ENCODE measurements at regions of chr4 and their contacts with region 1.

Region 1: DNA sequence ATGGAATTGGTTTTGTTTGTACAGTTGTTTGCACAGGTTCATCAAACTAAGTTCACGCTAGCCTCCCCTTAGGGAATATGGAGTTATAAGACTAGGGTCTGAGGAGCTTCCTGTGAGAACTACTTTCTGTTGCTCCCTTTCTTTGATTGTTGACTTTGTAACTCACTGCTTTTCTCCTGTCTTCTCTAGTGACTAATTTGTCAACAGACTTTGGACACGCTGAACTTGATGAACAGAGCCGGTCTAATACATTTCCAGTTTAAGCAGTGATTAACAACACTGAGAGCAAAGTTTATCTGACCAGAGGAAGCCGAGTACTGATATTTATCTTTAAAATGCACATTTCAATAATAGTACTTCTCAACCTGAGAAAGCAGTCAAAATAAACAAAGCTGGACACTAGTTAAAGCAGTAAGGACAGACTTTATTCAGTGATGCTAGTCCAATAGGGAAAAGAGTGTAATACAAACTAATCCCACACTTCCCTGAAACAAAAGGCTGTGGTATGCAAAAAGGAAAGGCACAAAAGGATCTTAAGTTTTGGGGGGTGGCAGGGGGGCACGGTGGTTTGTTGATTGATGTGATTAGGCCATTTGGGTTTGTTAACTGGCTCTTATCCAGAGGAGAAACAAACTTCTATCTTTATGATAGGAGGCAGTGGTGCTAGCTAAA is 2.7 kb upstream of the NUDT9 start:
- DNase-seq: no peak
- H3K4me3 ChIP-seq: no peak overlapping the region
- CTCF ChIP-seq: no peak
- POLR2A ChIP-seq: no peak

Region 2: DNA sequence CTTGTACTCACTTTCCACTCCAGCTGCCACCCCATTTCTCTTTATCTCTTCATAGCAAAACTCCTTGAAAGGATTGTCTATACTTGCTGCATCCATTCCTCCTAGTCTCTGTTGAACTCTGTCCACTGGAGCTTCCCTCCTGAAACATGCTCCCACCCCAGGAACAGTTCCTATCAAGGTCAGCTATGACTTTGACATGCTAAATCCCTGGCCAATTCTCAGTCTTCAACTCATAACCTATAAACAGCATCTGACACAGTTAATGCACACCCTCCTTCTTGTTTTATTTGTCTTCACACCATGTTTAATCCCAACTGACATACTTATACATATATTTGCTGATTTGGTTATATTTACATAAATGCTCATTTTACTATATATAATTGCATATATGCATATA is 61.7 kb after region 1 on chr4:
- intact Hi-C with region 1: loop called (anchors 5 kb)
- DNase-seq: no peak
- H3K4me3 ChIP-seq: no peak overlapping the region
- CTCF ChIP-seq: no peak
- POLR2A ChIP-seq: no peak